Caco-2 (cell line): ENCODE measurements at regions of chr14 and their contacts with region 1.

Region 1: GRCh38 chr14:73851644-73852382 is at the start of gene PTGR2:
- DNase-seq: peak; percentile 99
- H3K4me3 ChIP-seq: peak within 1 kb of the TSS; percentile 56
- H3K4me3 Mint-ChIP-seq: peak within 1 kb of the TSS; percentile 94
- H3K27ac Mint-ChIP-seq: peak within 1 kb of the TSS; percentile 99
- H3K4me1 ChIP-seq: peaks cover 18% of the 10 kb centered on the region
- H3K4me1 Mint-ChIP-seq: no peaks in the 10 kb centered on the region
- H3K27me3 ChIP-seq: no peaks in the 10 kb centered on the region
- H3K27me3 Mint-ChIP-seq: no peaks in the 10 kb centered on the region
- CTCF ChIP-seq: peak in 1 of 2 experiments; percentile 14
- total RNA-seq, gene PTGR2: 14.2 and 16.5 TPM in 2 replicates

Region 2: GRCh38 chr14:73771848-73772638 is 79.8 kb before region 1 on chr14:
- CTCF ChIA-PET with region 1: interaction called, 7 read pairs
- POLR2A ChIA-PET with region 1: interaction called, 10 read pairs
- intact Hi-C with region 1: no loop called
- DNase-seq: peak; percentile 91 to 94
- H3K4me3 ChIP-seq: no peak overlapping the region
- H3K4me3 Mint-ChIP-seq: peak overlapping the region; percentile 44
- H3K27ac Mint-ChIP-seq: peak overlapping the region; percentile 51
- H3K4me1 ChIP-seq: peaks cover 31% of the 10 kb centered on the region
- H3K4me1 Mint-ChIP-seq: peaks cover 50% of the 10 kb centered on the region
- H3K27me3 ChIP-seq: no peaks in the 10 kb centered on the region
- H3K27me3 Mint-ChIP-seq: no peaks in the 10 kb centered on the region
- CTCF ChIP-seq: no peak

Region 3: DNA sequence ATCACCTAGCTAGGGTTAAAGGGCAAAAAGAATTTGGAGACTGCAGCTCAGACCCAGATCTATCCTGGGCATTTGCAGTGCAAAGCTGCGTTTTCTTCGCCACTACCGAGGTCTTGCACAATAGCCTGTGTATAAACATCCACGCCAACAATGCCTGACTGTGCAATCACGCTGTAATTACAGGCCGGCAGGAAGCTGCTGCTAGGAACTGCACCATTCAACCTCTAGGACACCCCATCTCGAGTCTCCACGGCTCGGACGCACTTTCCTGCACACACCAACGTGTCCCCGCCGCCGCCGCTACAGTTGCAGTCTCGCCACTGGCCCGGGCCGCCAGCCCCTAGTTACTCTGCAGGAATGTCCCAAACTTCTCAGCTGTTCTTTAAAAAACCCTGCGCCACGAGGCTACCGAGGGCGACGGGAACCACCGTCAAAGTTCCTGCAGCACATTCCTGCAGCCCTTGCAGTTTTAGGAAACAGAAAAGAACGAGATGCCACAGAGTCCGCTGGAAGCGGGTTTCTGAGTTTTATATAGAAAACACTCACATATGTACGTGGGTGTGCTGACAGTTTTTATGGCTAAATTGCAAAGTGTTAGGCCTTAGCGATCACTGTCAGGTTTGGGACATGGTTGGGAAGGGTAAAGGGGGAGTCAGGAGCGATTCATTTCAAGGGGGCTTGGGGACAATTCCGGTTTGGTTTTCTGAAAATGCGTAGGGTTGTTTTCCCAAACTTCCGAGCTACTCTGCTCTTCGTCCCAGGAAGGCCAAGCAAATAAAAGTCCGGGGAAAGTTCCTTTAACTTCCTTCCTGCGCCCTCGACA is 65.7 kb before region 1 on chr14:
- CTCF ChIA-PET with region 1: interaction called, 4 read pairs
- POLR2A ChIA-PET with region 1: interaction called, 10 read pairs
- intact Hi-C with region 1: no loop called
- DNase-seq: peak; percentile 84 to 88
- H3K4me3 ChIP-seq: peak overlapping the region; percentile 64
- H3K4me3 Mint-ChIP-seq: peak overlapping the region; percentile 92
- H3K27ac Mint-ChIP-seq: peak overlapping the region; percentile 77
- H3K4me1 ChIP-seq: peaks cover 57% of the 10 kb centered on the region
- H3K4me1 Mint-ChIP-seq: peaks cover 47% of the 10 kb centered on the region
- H3K27me3 ChIP-seq: no peaks in the 10 kb centered on the region
- H3K27me3 Mint-ChIP-seq: no peaks in the 10 kb centered on the region
- CTCF ChIP-seq: peak in 1 of 2 experiments; percentile 20

Region 4: GRCh38 chr14:73795972-73796371 is 55.8 kb before region 1 on chr14:
- CTCF ChIA-PET with region 1: no interaction called
- POLR2A ChIA-PET with region 1: no interaction called
- intact Hi-C with region 1: loop called (anchors 2 kb)
- DNase-seq: peak; percentile 92 to 96
- H3K4me3 ChIP-seq: no peak overlapping the region
- H3K4me3 Mint-ChIP-seq: no peak overlapping the region
- H3K27ac Mint-ChIP-seq: peak overlapping the region; percentile 56
- H3K4me1 ChIP-seq: peaks cover 49% of the 10 kb centered on the region
- H3K4me1 Mint-ChIP-seq: peaks cover 46% of the 10 kb centered on the region
- H3K27me3 ChIP-seq: no peaks in the 10 kb centered on the region
- H3K27me3 Mint-ChIP-seq: no peaks in the 10 kb centered on the region
- CTCF ChIP-seq: no peak

Region 5: GRCh38 chr14:73833530-73834257 is 18.1 kb before region 1 on chr14:
- CTCF ChIA-PET with region 1: interaction called, 5 read pairs
- POLR2A ChIA-PET with region 1: interaction called, 21 read pairs
- intact Hi-C with region 1: loop called (anchors 1 kb)
- DNase-seq: no peak
- H3K4me3 ChIP-seq: no peak overlapping the region
- H3K4me3 Mint-ChIP-seq: no peak overlapping the region
- H3K27ac Mint-ChIP-seq: no peak overlapping the region
- H3K4me1 ChIP-seq: peaks cover 38% of the 10 kb centered on the region
- H3K4me1 Mint-ChIP-seq: peaks cover 17% of the 10 kb centered on the region
- H3K27me3 ChIP-seq: no peaks in the 10 kb centered on the region
- H3K27me3 Mint-ChIP-seq: no peaks in the 10 kb centered on the region
- CTCF ChIP-seq: no peak

Region 6: GRCh38 chr14:73873660-73874059 is 21.8 kb after region 1 on chr14:
- CTCF ChIA-PET with region 1: no interaction called
- POLR2A ChIA-PET with region 1: no interaction called
- intact Hi-C with region 1: no loop called
- DNase-seq: no peak
- H3K4me3 ChIP-seq: no peak overlapping the region
- H3K4me3 Mint-ChIP-seq: no peak overlapping the region
- H3K27ac Mint-ChIP-seq: no peak overlapping the region
- H3K4me1 ChIP-seq: no peaks in the 10 kb centered on the region
- H3K4me1 Mint-ChIP-seq: peaks cover 4% of the 10 kb centered on the region
- H3K27me3 ChIP-seq: no peaks in the 10 kb centered on the region
- H3K27me3 Mint-ChIP-seq: no peaks in the 10 kb centered on the region
- CTCF ChIP-seq: no peak

Region 7: DNA sequence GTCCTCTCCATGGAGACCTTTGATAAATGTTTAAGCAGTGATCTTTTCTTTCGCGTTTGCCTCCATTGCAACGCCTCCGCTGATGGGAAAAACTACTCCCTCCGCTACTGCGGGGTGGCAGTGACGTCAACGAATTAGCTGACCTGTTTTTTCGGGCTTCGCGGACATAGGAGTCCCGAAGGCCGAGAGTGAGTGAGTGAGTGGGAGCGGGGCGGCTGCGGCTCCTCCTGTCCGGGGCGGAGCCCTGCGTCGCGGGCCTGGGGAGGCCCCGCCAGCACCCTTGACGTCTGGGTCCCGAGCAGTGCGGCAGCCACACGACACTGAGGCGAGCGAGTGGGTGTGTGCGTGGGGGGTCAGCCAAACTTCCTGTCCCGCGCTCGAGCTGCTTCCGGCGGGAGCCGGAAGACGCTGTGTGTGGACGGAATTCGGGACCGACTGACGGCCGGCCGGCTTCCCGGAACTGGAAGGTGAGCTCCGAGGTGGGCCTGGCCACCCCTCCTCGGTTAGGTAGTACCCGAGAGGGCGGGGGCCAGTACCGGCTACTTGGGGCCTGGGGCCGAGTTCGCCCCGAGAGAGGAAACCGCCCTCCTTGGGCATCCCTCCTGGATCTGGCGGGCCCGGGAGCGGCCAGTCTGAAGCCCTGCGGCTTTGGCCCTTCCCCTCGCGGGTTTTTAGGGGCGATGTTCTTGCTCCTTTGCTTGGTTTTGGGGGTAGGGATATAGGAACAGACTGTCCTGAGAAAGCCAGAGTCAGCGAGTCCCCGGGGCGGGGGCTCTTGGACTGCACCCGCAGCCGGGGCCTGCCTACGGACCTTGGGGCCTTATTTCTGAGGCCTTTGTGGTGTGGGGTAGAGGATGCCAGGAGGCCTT is 34.9 kb after region 1 on chr14 and contains the start of gene ZNF410:
- CTCF ChIA-PET with region 1: no interaction called
- POLR2A ChIA-PET with region 1: interaction called, 26 read pairs
- intact Hi-C with region 1: loop called (anchors 1 kb)
- DNase-seq: peak; percentile 94 to 95
- H3K4me3 ChIP-seq: peak within 1 kb of the TSS; percentile 69
- H3K4me3 Mint-ChIP-seq: peak within 1 kb of the TSS; percentile 96
- H3K27ac Mint-ChIP-seq: peak within 1 kb of the TSS; percentile 98
- H3K4me1 ChIP-seq: peaks cover 17% of the 10 kb centered on the region
- H3K4me1 Mint-ChIP-seq: peaks cover 26% of the 10 kb centered on the region
- H3K27me3 ChIP-seq: no peaks in the 10 kb centered on the region
- H3K27me3 Mint-ChIP-seq: no peaks in the 10 kb centered on the region
- CTCF ChIP-seq: no peak
- total RNA-seq, gene ZNF410: 35.9 and 36.8 TPM in 2 replicates

Region 8: DNA sequence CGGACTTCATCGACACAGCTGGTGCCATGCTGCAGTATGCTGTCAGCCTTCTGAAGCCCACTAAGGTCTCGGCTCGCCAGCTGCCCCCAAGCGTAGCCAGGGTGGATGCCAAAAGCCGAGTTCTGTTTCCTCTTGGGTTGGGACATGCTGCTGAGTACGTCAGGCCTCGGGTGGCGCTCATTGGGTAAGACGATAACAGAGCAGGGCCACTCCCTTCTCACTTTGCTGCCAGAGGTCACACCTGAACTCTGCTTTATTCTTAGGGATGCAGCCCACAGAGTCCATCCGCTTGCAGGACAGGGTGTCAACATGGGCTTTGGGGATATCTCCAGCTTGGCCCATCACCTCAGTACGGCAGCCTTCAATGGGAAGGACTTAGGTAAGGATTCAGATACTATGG is 109.4 kb after region 1 on chr14:
- CTCF ChIA-PET with region 1: no interaction called
- POLR2A ChIA-PET with region 1: no interaction called
- intact Hi-C with region 1: no loop called
- DNase-seq: no peak
- H3K4me3 ChIP-seq: no peak overlapping the region
- H3K4me3 Mint-ChIP-seq: no peak overlapping the region
- H3K27ac Mint-ChIP-seq: no peak overlapping the region
- H3K4me1 ChIP-seq: no peaks in the 10 kb centered on the region
- H3K4me1 Mint-ChIP-seq: no peaks in the 10 kb centered on the region
- H3K27me3 ChIP-seq: no peaks in the 10 kb centered on the region
- H3K27me3 Mint-ChIP-seq: no peaks in the 10 kb centered on the region
- CTCF ChIP-seq: no peak

Region 9: DNA sequence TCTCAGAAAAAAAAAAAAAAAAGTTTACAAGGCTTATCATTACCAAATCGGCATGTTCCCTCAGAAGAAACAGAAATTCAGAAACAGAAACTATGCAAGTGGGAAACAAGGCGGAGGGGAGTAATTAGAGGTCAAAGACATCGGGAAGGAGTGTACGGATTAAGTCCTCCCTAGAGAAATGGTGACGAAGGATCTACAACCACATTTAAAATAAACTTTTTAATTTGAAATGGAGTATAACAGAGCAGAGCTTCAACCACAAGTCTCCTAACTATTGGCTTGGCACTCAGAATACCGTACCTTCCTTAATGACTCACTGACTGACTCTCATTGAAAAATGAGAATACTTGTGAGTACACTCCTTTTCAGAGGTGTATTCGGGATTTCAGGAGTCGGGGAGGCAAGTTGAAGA is 166.4 kb after region 1 on chr14:
- CTCF ChIA-PET with region 1: no interaction called
- POLR2A ChIA-PET with region 1: no interaction called
- intact Hi-C with region 1: no loop called
- DNase-seq: no peak
- H3K4me3 ChIP-seq: peak overlapping the region; percentile 51
- H3K4me3 Mint-ChIP-seq: peak overlapping the region; percentile 90
- H3K27ac Mint-ChIP-seq: peak overlapping the region; percentile 90
- H3K4me1 ChIP-seq: peaks cover 11% of the 10 kb centered on the region
- H3K4me1 Mint-ChIP-seq: peaks cover 6% of the 10 kb centered on the region
- H3K27me3 ChIP-seq: no peaks in the 10 kb centered on the region
- H3K27me3 Mint-ChIP-seq: no peaks in the 10 kb centered on the region
- CTCF ChIP-seq: no peak